ENCODE measurements at regions of chr9 and their contacts with region 1.

Region 1: GRCh38 chr9:33049680-33050361 is 24.7 kb downstream of the DNAJA1 start:
- DNase-seq: no peak
- ATAC-seq: no peak
- H3K4me3 ChIP-seq: no peak overlapping the region
- H3K4me3 Mint-ChIP-seq: no peak overlapping the region
- H3K27ac ChIP-seq: no peak overlapping the region
- H3K27ac Mint-ChIP-seq: peak overlapping the region in 1 of 2 donors; percentile 22
- H3K4me1 ChIP-seq: peaks cover 0 to under 1% of the 10 kb centered on the region in 2 experiments
- H3K4me1 Mint-ChIP-seq: peaks cover 2 to 5% (median 2%) of the 10 kb centered on the region in 3 donors
- H3K27me3 ChIP-seq: no peaks in the 10 kb centered on the region
- H3K27me3 Mint-ChIP-seq: no peaks in the 10 kb centered on the region

Region 2: GRCh38 chr9:33750307-33750838 is 700.6 kb after region 1 on chr9:
- CTCF ChIA-PET with region 1: no interaction called
- POLR2A ChIA-PET with region 1: no interaction called
- DNase-seq: no peak
- ATAC-seq: no peak
- H3K4me3 ChIP-seq: no peak overlapping the region
- H3K4me3 Mint-ChIP-seq: peak overlapping the region in 2 of 3 donors; percentile 29 to 68
- H3K27ac ChIP-seq: no peak overlapping the region
- H3K27ac Mint-ChIP-seq: no peak overlapping the region
- H3K4me1 ChIP-seq: peaks cover 0 to 35% of the 10 kb centered on the region in 2 experiments
- H3K4me1 Mint-ChIP-seq: peaks cover 14 to 37% (median 33%) of the 10 kb centered on the region in 3 donors
- H3K27me3 ChIP-seq: peaks cover 0 to 40% of the 10 kb centered on the region in 2 experiments
- H3K27me3 Mint-ChIP-seq: peaks cover 58 to 69% of the 10 kb centered on the region in 2 donors

Region 3: GRCh38 chr9:34484682-34485081 is 1434.9 kb after region 1 on chr9:
- CTCF ChIA-PET with region 1: no interaction called
- POLR2A ChIA-PET with region 1: interaction called in 1 of 2 experiments, 10 read pairs
- DNase-seq: no peak
- ATAC-seq: no peak
- H3K4me3 ChIP-seq: no peak overlapping the region
- H3K4me3 Mint-ChIP-seq: no peak overlapping the region
- H3K27ac ChIP-seq: no peak overlapping the region
- H3K27ac Mint-ChIP-seq: no peak overlapping the region
- H3K4me1 ChIP-seq: no peaks in the 10 kb centered on the region
- H3K4me1 Mint-ChIP-seq: no peaks in the 10 kb centered on the region
- H3K27me3 ChIP-seq: peaks cover 5 to 11% of the 10 kb centered on the region in 2 experiments
- H3K27me3 Mint-ChIP-seq: peaks cover 20 to 30% of the 10 kb centered on the region in 2 donors

Measured in T-cell (primary cell).